Gastrocnemius medialis (tissue), 4 donors: ENCODE measurements at regions of chr19 and their contacts with region 1.

Region 1: GRCh38 chr19:49676690-49677231 is 310 bp upstream of the PRMT1 start:
- DNase-seq: peak; percentile 100
- ATAC-seq: peak; percentile 75 to 83
- H3K4me3 ChIP-seq: peak overlapping the region; percentile 78 to 99 (median 95)
- H3K27ac ChIP-seq: peak overlapping the region; percentile 98 to 100 (median 99)
- H3K4me1 ChIP-seq: peaks cover 42 to 53% of the 10 kb centered on the region in 2 donors
- H3K27me3 ChIP-seq: no peaks in the 10 kb centered on the region
- CTCF ChIP-seq: no peak
- POLR2A ChIP-seq: no peak

Region 2: DNA sequence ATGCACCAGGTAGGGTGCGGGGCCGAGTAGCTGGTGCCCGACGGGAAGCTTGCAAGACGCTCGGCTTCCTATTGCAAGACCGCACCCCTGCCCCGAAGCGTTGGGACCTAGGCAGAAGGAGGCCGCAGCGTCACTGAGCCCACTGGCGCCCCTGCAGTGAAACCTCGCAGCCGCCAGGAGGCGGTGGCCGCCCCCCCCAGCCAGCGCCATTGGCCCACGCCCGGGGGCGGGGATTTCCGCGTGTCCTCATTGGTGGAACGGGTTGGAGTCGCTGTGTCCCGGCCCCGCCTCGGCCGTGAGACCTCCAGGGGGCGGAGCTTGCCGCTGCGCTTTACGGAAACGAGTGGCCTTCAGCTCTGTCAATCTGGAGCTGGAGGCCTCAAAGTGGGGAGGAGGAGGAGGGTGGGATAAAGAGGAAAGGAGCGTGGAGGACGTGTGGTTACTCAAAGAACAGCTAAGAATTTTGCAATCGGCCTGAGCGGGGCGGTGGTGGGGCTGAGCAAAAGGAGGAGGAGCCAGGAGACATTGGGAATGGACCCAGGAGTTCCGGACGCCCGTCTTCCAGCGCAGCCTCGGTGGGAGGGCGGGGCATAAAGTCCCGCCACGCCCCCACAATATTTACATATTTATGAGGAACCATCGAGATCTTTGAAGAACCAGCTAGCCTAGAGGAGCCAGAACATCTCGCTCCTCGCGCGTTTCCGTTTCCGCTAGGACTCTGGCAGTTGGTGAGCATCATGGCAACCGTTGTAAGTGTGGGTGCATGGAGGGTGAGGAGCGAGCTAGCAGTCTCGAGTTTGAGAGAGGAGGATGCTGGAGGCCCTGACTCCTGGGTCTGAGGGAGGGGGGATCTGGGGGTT is 683.4 kb before region 1 on chr19 and contains the starts of genes GYS1 and RUVBL2:
- in situ Hi-C with region 1: no loop called
- intact Hi-C with region 1: loop called (anchors 5 kb)
- DNase-seq: peak; percentile 98 to 100
- ATAC-seq: peak; percentile 73 to 75
- H3K4me3 ChIP-seq: peak within 1 kb of the TSS; percentile 75 to 99 (median 84)
- H3K27ac ChIP-seq: peak within 1 kb of the TSS; percentile 93 to 100 (median 99)
- H3K4me1 ChIP-seq: peaks cover 44 to 51% of the 10 kb centered on the region in 2 donors
- H3K27me3 ChIP-seq: no peaks in the 10 kb centered on the region
- CTCF ChIP-seq: peak; percentile 98 to 99 (median 99)
- POLR2A ChIP-seq: peak; percentile 98 to 99
- total RNA-seq, gene GYS1: 110 to 221 (median 126) TPM
- total RNA-seq, gene RUVBL2: 134 to 185 (median 146) TPM

Region 3: DNA sequence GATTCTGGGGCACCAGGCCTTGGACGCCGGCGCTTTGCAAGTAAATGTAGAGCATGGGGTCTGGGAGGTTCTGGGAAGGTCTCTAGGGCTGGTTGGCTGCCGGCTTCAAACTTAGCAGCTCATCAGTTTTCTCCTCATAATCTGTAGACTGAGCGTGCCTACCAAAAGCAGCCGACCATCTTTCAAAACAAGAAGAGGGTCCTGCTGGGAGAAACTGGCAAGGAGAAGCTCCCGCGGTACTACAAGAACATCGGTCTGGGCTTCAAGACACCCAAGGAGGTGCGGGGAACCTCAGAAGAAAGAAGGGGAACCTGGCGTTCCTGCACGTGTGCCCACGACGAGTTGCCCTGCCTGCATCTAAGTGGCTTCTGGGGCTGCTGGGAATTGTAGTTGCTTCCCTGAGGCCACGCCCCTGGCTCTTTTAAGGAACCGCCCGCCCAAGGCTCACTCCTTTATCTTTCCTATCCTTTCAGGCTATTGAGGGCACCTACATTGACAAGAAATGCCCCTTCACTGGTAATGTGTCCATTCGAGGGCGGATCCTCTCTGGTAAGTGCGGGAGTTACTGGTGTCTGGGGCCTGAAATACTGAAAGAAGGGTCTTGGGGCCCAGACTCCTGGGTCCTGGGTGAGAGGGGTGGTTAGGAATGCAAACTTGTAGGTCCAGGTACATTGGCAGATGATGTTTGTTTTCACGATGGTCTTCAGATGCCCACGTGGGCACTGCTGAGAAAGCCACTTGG is 179.5 kb before region 1 on chr19:
- in situ Hi-C with region 1: no loop called
- intact Hi-C with region 1: loop called (anchors 2 kb)
- DNase-seq: peak; percentile 48 to 63
- ATAC-seq: no peak
- H3K4me3 ChIP-seq: peak overlapping the region; percentile 79 to 96 (median 90)
- H3K27ac ChIP-seq: peak overlapping the region; percentile 93 to 98 (median 96)
- H3K4me1 ChIP-seq: peaks cover 27 to 31% of the 10 kb centered on the region in 2 donors
- H3K27me3 ChIP-seq: no peaks in the 10 kb centered on the region
- CTCF ChIP-seq: no peak
- POLR2A ChIP-seq: peak; percentile 24 to 62

Region 4: GRCh38 chr19:49590071-49590970 is 86.4 kb before region 1 on chr19:
- in situ Hi-C with region 1: no loop called
- intact Hi-C with region 1: loop called (anchors 5 kb)
- DNase-seq: peak; percentile 84 to 95
- ATAC-seq: peak; percentile 68 to 74
- H3K4me3 ChIP-seq: peak overlapping the region; percentile 62 to 82 (median 70)
- H3K27ac ChIP-seq: peak overlapping the region; percentile 86 to 95 (median 94)
- H3K4me1 ChIP-seq: peaks cover 14 to 15% of the 10 kb centered on the region in 2 donors
- H3K27me3 ChIP-seq: no peaks in the 10 kb centered on the region
- CTCF ChIP-seq: no peak
- POLR2A ChIP-seq: peak; percentile 65 to 72

Region 5: GRCh38 chr19:49808711-49809159 is 132.0 kb after region 1 on chr19:
- in situ Hi-C with region 1: no loop called
- intact Hi-C with region 1: loop called (anchors 2 kb)
- DNase-seq: peak; percentile 92 to 94
- ATAC-seq: peak; percentile 44 to 57
- H3K4me3 ChIP-seq: peak overlapping the region; percentile 67 to 87 (median 80)
- H3K27ac ChIP-seq: peak overlapping the region; percentile 91 to 96 (median 94)
- H3K4me1 ChIP-seq: peaks cover 17 to 21% of the 10 kb centered on the region in 2 donors
- H3K27me3 ChIP-seq: no peaks in the 10 kb centered on the region
- CTCF ChIP-seq: peak in 1 of 5 experiments; percentile 14
- POLR2A ChIP-seq: peak; percentile 77 to 82

Region 6: GRCh38 chr19:50025024-50025789 is 348.4 kb after region 1 on chr19 and contains the start of gene VRK3:
- in situ Hi-C with region 1: no loop called
- intact Hi-C with region 1: loop called (anchors 5 kb)
- DNase-seq: peak; percentile 99
- ATAC-seq: peak; percentile 99
- H3K4me3 ChIP-seq: peak within 1 kb of the TSS; percentile 93 to 99 (median 96)
- H3K27ac ChIP-seq: peak within 1 kb of the TSS; percentile 90 to 98 (median 94)
- H3K4me1 ChIP-seq: peaks cover 24 to 27% of the 10 kb centered on the region in 2 donors
- H3K27me3 ChIP-seq: no peaks in the 10 kb centered on the region
- CTCF ChIP-seq: no peak
- POLR2A ChIP-seq: peak; percentile 56 to 77
- total RNA-seq, gene VRK3: 36.0 to 52.8 (median 39.9) TPM